Mammary epithelial cell (primary cell): ENCODE measurements at regions of chr13 and their contacts with region 1.

Region 1: GRCh38 chr13:30659980-30660379 is 42.3 kb downstream of the USPL1 start:
- DNase-seq: peak; percentile 8
- H3K4me3 ChIP-seq: no peak overlapping the region
- H3K27ac ChIP-seq: no peak overlapping the region
- H3K4me1 ChIP-seq: no peaks in the 10 kb centered on the region
- H3K27me3 ChIP-seq: no peaks in the 10 kb centered on the region
- CTCF ChIP-seq: no peak

Region 2: GRCh38 chr13:30708541-30708940 is 48.6 kb after region 1 on chr13:
- CTCF ChIA-PET with region 1: no interaction called
- dilution Hi-C with region 1: loop called (anchors 5 kb)
- in situ Hi-C with region 1: no loop called
- intact Hi-C with region 1: no loop called
- DNase-seq: no peak
- H3K4me3 ChIP-seq: no peak overlapping the region
- H3K27ac ChIP-seq: no peak overlapping the region
- H3K4me1 ChIP-seq: peaks cover 10% of the 10 kb centered on the region
- H3K27me3 ChIP-seq: no peaks in the 10 kb centered on the region
- CTCF ChIP-seq: no peak